Naive thymus-derived CD4-positive, alpha-beta T cell (primary cell): ENCODE measurements at regions of chr4 and their contacts with region 1.

Region 1: GRCh38 chr4:145565328-145565727 is 53.9 kb upstream of the MMAA start:
- DNase-seq: no peak
- ATAC-seq: no peak
- H3K4me3 ChIP-seq: no peak overlapping the region
- H3K4me3 Mint-ChIP-seq: no peak overlapping the region
- H3K27ac ChIP-seq: no peak overlapping the region
- H3K27ac Mint-ChIP-seq: no peak overlapping the region
- H3K4me1 ChIP-seq: no peaks in the 10 kb centered on the region
- H3K4me1 Mint-ChIP-seq: no peaks in the 10 kb centered on the region
- H3K27me3 ChIP-seq: peaks cover 0 to 2% of the 10 kb centered on the region in 2 donors
- H3K27me3 Mint-ChIP-seq: peaks cover 12 to 68% (median 44%) of the 10 kb centered on the region in 5 donors

Region 2: DNA sequence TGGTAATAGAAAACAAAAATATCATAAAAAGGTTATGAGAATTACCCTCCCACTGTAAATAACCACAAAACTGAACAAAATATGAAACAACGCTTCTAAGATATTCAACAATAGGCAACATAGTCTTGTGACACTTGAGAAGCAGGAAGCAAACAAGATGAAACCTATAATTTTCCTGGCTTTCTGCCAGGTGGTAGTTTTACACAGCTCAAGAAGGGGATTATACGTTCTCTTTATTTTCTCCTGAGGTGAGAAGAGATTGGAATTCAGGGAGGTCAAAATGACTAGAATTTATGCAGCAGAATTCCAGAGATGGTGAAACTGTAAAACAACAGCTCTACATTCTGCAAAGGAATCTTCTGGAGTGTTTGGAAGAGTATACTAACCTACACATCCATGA is 733.4 kb before region 1 on chr4:
- CTCF ChIA-PET with region 1: no interaction called
- POLR2A ChIA-PET with region 1: no interaction called
- intact Hi-C with region 1: no loop called
- DNase-seq: no peak
- ATAC-seq: no peak
- H3K4me3 ChIP-seq: no peak overlapping the region
- H3K4me3 Mint-ChIP-seq: no peak overlapping the region
- H3K27ac ChIP-seq: no peak overlapping the region
- H3K27ac Mint-ChIP-seq: no peak overlapping the region
- H3K4me1 ChIP-seq: no peaks in the 10 kb centered on the region
- H3K4me1 Mint-ChIP-seq: no peaks in the 10 kb centered on the region
- H3K27me3 ChIP-seq: no peaks in the 10 kb centered on the region
- H3K27me3 Mint-ChIP-seq: no peaks in the 10 kb centered on the region

Region 3: DNA sequence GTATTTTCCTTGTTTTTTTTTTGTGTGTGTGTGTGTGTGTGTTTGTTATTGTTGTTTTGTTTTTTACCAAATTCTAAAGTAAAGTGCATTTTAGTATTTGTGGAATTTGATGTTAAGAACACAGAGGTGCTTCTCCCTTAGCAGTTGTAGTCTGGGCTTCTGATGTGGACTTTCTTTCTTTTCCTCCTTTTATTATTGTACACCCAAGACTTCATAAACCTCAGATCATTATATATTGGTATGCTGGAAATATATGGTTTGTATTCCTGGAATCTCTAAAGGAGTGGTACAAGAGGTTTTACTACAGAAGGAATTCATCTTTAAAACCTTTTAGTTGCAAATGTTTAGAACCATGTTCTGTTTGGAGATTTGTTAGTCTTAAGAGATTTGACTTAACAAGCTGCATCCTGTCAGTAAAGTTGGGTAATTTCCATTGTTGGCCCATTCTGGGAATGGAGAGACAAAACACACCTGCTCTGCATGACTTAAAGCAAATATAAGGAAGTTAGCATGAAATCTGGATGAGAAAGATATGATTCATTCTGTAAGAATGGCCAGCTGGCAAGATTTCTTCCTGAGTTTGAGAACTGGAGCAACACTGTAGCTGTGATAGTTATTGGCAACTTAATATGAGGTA is 19.7 kb before region 1 on chr4:
- CTCF ChIA-PET with region 1: no interaction called
- POLR2A ChIA-PET with region 1: no interaction called
- intact Hi-C with region 1: loop called in 1 of 2 experiments (anchors 1 kb)
- DNase-seq: no peak
- ATAC-seq: no peak
- H3K4me3 ChIP-seq: no peak overlapping the region
- H3K4me3 Mint-ChIP-seq: no peak overlapping the region
- H3K27ac ChIP-seq: no peak overlapping the region
- H3K27ac Mint-ChIP-seq: no peak overlapping the region
- H3K4me1 ChIP-seq: no peaks in the 10 kb centered on the region
- H3K4me1 Mint-ChIP-seq: peaks cover 0 to 3% (median 0%) of the 10 kb centered on the region in 7 donors
- H3K27me3 ChIP-seq: no peaks in the 10 kb centered on the region
- H3K27me3 Mint-ChIP-seq: peaks cover 0 to 7% (median 0%) of the 10 kb centered on the region in 5 donors